ENCODE measurements at regions of chr11 and their contacts with region 1.

Region 1: GRCh38 chr11:67288452-67289225 is 464 bp upstream of the ANKRD13D start:
- DNase-seq: peak; percentile 91 to 96
- H3K4me3 ChIP-seq: peak overlapping the region; percentile 69 to 73
- H3K27ac ChIP-seq: peak overlapping the region; percentile 93 to 94
- H3K4me1 ChIP-seq: peaks cover 7 to 39% (median 26%) of the 10 kb centered on the region in 4 donors
- H3K27me3 ChIP-seq: no peaks in the 10 kb centered on the region
- CTCF ChIP-seq: peak in 1 of 2 experiments; percentile 48

Region 2: GRCh38 chr11:67230406-67230805 is 58.2 kb before region 1 on chr11:
- intact Hi-C with region 1: no loop called
- DNase-seq: no peak
- H3K4me3 ChIP-seq: no peak overlapping the region
- H3K27ac ChIP-seq: no peak overlapping the region
- H3K4me1 ChIP-seq: no peaks in the 10 kb centered on the region
- H3K27me3 ChIP-seq: no peaks in the 10 kb centered on the region
- CTCF ChIP-seq: no peak

Region 3: DNA sequence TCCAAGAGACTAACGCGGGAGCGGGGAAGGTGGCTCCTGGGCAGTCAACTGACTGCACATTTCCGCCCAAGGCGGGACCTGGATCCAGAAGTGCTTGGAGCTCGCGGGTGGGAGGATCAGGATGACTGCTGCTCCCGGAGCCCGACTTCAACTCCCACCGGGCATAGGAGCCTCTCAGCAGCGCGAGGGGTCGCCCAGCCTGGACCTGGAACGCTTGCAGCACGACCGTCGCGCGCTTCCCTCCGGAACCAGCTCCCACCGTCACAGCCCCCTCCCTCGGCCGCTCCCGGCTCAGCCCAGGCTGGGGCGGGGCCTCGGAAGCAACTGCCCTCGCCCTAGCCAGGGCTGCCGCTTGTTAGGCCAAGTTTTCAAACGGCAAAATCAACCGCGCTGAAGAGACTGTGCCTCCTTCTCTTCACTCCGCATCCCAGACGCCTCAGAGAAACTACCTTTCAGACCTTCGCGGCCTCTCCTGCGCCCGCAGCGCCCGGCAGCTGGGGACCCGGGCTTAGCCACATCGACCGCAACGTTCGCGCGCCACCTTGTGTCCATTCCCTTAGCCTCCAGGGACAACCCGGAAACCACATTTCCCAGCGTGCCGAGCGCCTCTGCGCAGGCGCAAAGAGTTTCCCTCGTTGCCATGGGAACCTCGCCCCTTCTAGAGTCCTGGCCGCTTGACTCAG is 28.7 kb after region 1 on chr11:
- intact Hi-C with region 1: loop called (anchors 1 kb)
- DNase-seq: peak; percentile 94 to 97
- H3K4me3 ChIP-seq: peak overlapping the region; percentile 64 to 78
- H3K27ac ChIP-seq: peak overlapping the region; percentile 91 to 94
- H3K4me1 ChIP-seq: peaks cover 0 to 19% (median 10%) of the 10 kb centered on the region in 4 donors
- H3K27me3 ChIP-seq: no peaks in the 10 kb centered on the region
- CTCF ChIP-seq: peak; percentile 91 to 99

Measured in tibial artery (tissue), 4 donors.